Dendritic cell treated with granulocyte-macrophage colony-stimulating factor and Interleukin-4, amounts not matched to agents 40 ng/mL and 50 ng/mL, for 4 days (primary cell): ENCODE measurements at regions of chr10 and their contacts with region 1.

Region 1: GRCh38 chr10:62437696-62438095 is 63.5 kb downstream of the ZNF365 start:
- H3K4me3 Mint-ChIP-seq: no peak overlapping the region
- H3K27ac Mint-ChIP-seq: no peak overlapping the region
- H3K4me1 Mint-ChIP-seq: peaks cover 13% of the 10 kb centered on the region
- H3K27me3 Mint-ChIP-seq: peaks cover 5% of the 10 kb centered on the region

Region 2: GRCh38 chr10:62038609-62039190 is 399.0 kb before region 1 on chr10:
- intact Hi-C with region 1: loop called (anchors 10 kb)
- H3K4me3 Mint-ChIP-seq: peak overlapping the region; percentile 44
- H3K27ac Mint-ChIP-seq: peak overlapping the region; percentile 64
- H3K4me1 Mint-ChIP-seq: peaks cover 45% of the 10 kb centered on the region
- H3K27me3 Mint-ChIP-seq: no peaks in the 10 kb centered on the region

Region 3: GRCh38 chr10:62284221-62284620 is 153.5 kb before region 1 on chr10:
- intact Hi-C with region 1: no loop called
- H3K4me3 Mint-ChIP-seq: no peak overlapping the region
- H3K27ac Mint-ChIP-seq: no peak overlapping the region
- H3K4me1 Mint-ChIP-seq: no peaks in the 10 kb centered on the region
- H3K27me3 Mint-ChIP-seq: no peaks in the 10 kb centered on the region

Region 4: DNA sequence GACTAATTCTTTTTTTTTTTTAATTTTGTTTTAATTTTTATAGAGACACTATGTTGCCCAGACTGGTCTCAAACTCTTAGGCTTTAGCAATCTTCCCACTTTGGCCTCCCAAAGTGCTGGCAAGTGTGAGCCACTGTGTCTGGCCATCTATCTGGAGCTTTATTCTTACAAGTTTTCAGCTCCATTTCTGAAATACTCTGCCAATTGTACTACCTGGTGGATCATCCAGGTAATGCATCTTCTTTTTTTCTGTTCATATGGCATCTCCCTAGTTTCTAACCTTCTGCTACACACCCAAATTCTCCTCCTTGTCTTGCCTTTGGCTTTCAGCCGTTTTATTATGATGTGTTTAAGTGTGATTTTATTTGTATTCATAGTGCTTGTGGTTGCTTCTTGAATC is 23.3 kb before region 1 on chr10:
- intact Hi-C with region 1: no loop called
- H3K4me3 Mint-ChIP-seq: no peak overlapping the region
- H3K27ac Mint-ChIP-seq: no peak overlapping the region
- H3K4me1 Mint-ChIP-seq: no peaks in the 10 kb centered on the region
- H3K27me3 Mint-ChIP-seq: peaks cover 25% of the 10 kb centered on the region

Region 5: GRCh38 chr10:62554632-62555199 is 117.0 kb after region 1 on chr10:
- intact Hi-C with region 1: loop called (anchors 5 kb)
- H3K4me3 Mint-ChIP-seq: no peak overlapping the region
- H3K27ac Mint-ChIP-seq: no peak overlapping the region
- H3K4me1 Mint-ChIP-seq: peaks cover 10% of the 10 kb centered on the region
- H3K27me3 Mint-ChIP-seq: peaks cover 17% of the 10 kb centered on the region

Region 6: DNA sequence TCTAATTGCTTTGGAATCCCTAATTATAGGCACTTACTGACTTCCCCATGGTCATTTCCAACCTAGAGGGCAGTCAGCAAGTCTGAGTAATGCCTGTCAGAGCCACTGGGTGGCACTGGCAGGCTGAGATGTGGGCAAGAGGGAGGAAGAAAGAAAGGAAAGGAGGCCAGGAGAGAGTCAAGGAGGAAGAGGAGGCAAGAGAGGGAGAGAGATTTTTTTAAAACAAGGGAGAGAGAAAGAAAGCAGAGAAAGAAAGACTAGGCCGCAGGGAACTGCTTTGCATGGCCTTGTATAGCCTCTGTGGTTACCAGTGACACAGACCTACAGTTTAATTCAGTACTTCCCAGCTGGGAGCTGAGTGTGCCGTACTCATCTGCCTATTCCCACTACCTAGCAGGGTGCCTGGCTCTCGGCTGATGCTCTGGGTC is 156.4 kb after region 1 on chr10:
- intact Hi-C with region 1: loop called (anchors 5 kb)
- H3K4me3 Mint-ChIP-seq: no peak overlapping the region
- H3K27ac Mint-ChIP-seq: peak overlapping the region; percentile 24
- H3K4me1 Mint-ChIP-seq: peaks cover 22% of the 10 kb centered on the region
- H3K27me3 Mint-ChIP-seq: no peaks in the 10 kb centered on the region

Region 7: DNA sequence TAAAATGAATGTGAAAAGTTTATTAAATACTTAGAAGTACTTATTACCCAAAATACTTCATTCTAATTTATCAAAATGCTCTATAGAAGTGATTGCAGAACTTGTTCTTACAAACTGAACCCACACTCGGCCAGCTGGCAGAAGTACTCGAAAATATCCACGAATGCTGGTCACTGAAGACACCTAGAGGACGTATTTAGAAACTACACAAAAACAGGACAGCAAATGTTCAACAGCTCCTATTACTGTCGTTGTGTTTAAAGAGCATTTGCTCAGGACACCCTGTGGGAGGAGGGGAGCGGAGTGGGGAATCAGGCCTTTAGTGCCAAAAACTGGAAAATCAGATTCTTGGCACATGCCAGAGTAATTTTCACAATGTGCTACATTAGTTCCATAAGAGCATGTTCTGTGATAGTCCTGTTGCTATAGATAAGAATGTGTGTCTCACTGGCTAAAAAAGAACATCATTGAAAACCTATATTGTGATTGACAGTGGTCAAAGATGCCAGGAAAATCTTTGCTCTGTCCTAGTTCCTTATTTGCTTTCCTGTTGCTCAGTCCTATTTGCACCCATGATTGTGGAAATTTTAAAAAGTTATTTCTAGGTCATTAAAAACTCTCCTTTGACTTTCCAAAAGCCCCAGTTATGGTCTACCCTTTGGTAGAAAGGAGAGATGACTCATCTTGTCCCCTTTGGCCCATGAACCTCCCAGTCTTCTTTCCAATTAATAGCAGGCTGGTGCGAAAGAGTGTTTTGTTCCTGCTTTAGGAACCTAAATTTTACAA is 646.4 kb after region 1 on chr10:
- intact Hi-C with region 1: loop called (anchors 2 kb)
- H3K4me3 Mint-ChIP-seq: no peak overlapping the region
- H3K27ac Mint-ChIP-seq: no peak overlapping the region
- H3K4me1 Mint-ChIP-seq: no peaks in the 10 kb centered on the region
- H3K27me3 Mint-ChIP-seq: peaks cover 22% of the 10 kb centered on the region

Region 8: GRCh38 chr10:63157845-63158624 is 720.3 kb after region 1 on chr10:
- intact Hi-C with region 1: loop called (anchors 5 kb)
- H3K4me3 Mint-ChIP-seq: no peak overlapping the region
- H3K27ac Mint-ChIP-seq: no peak overlapping the region
- H3K4me1 Mint-ChIP-seq: peaks cover 21% of the 10 kb centered on the region
- H3K27me3 Mint-ChIP-seq: no peaks in the 10 kb centered on the region